Left cardiac atrium (tissue), 4 donors: ENCODE measurements at regions of chr15 and their contacts with region 1.

Region 1: GRCh38 chr15:41727143-41727542 is 47.1 kb upstream of the MAPKBP1 start:
- DNase-seq: no peak
- ATAC-seq: no peak

Region 2: DNA sequence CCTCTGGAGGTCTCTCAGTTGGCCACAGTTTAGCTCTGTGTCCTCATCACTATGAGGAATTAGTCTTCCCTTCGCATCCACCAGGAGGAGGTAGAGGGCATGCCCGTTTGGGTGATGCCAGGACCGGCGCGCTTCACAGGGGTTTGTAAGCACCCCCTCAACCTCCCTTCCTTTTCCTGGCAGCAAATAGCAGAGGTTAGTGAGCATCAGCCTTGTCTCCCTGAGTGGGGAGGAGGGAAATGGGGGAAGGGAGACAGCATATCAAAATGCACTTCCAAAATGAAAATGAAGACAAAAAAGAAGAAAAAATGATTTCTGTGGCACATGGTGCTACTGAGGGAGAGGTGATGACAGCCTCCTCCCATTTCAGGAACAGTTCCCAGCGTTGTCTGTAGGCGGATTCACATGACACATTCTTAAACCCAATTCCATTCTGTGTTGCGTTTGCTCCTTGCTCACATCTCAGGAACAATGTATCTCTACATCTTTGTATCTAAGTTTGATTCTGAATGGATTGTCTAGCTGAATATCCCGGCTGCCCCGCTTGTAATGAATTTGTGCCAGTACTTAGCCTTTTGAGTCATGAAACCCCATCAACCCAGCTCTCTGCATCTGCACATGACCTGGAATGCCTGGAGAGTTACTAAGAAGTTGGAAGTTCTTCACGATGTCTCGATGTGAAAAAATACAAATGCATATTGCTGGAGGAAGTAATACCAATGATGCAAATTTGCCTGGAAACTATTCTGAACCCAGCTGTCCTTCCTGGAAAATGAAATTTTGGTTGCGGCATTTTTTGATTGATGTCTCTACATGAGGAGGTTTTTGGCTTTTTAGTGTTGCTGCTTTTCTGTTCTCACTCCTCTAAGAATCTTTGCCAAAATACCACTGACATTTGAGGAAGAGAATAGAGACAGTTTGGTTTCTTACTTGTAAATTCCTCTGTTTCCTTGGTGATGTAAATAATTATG is 122.9 kb before region 1 on chr15:
- intact Hi-C with region 1: loop called in 1 of 2 experiments (anchors 10 kb)
- DNase-seq: peak; percentile 79
- ATAC-seq: peak; percentile 94 to 96